ENCODE measurements at regions of chr7 and their contacts with region 1.

Region 1: DNA sequence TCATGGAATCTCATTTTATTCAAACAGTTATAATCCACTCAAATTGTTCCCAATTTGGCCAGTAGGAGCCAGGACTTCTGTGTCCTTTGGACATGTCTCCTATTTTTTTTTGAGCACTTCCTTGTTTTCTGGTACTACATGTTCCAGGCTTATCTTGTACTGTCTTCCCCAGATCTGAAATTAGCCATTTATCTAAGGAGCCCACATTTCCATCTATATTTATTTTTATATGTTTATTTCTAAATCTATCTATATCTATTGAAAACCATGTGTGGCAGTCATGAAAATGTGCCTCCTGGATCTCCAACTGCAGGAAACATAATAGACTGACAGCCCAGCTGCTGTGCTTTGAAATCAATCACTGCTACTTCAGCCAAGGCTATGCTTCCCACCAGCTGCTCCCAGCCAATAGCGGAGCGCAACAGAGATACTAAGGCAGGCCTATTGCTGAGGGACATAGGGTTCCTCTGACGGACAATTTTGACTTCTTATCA is 147.1 kb downstream of the LRRC4 start:
- DNase-seq: no peak

Region 2: GRCh38 chr7:127717502-127718339 is 166.4 kb before region 1 on chr7:
- intact Hi-C with region 1: loop called in 1 of 2 experiments (anchors 5 kb)
- DNase-seq: no peak

Measured in posterior vena cava (tissue), 2 donors.